ENCODE measurements at regions of chr5 and their contacts with region 1.

Region 1: GRCh38 chr5:15003511-15003920 is 131.9 kb upstream of the ANKH start:
- DNase-seq: peak; percentile 13
- ATAC-seq: peak; percentile 99
- H3K4me3 ChIP-seq: no peak overlapping the region
- H3K27ac ChIP-seq: no peak overlapping the region
- H3K4me1 ChIP-seq: no peaks in the 10 kb centered on the region
- H3K27me3 ChIP-seq: no peaks in the 10 kb centered on the region
- CTCF ChIP-seq: peak; percentile 72 to 88 (median 76); a peak in 5 of 6 replicates
- EP300 ChIP-seq: no peak
- POLR2A ChIP-seq: no peak
- RAD21 ChIP-seq: peak; percentile 84

Region 2: GRCh38 chr5:14720236-14720971 is 283.1 kb before region 1 on chr5:
- CTCF ChIA-PET with region 1: interaction called, 213 read pairs
- POLR2A ChIA-PET with region 1: interaction called, 6 read pairs
- RAD21 ChIA-PET with region 1: interaction called, 65 read pairs
- SMC1A ChIA-PET with region 1: interaction called, 90 read pairs
- in situ Hi-C with region 1: loop called (anchors 5 kb)
- intact Hi-C with region 1: no loop called
- DNase-seq: no peak
- ATAC-seq: no peak
- H3K4me3 ChIP-seq: no peak overlapping the region
- H3K27ac ChIP-seq: no peak overlapping the region
- H3K4me1 ChIP-seq: no peaks in the 10 kb centered on the region
- H3K27me3 ChIP-seq: no peaks in the 10 kb centered on the region
- CTCF ChIP-seq: no peak
- EP300 ChIP-seq: no peak
- POLR2A ChIP-seq: no peak
- RAD21 ChIP-seq: no peak

Region 3: GRCh38 chr5:14732991-14733390 is 270.5 kb before region 1 on chr5:
- CTCF ChIA-PET with region 1: interaction called, 213 read pairs
- POLR2A ChIA-PET with region 1: interaction called, 6 read pairs
- RAD21 ChIA-PET with region 1: interaction called, 65 read pairs
- SMC1A ChIA-PET with region 1: interaction called, 90 read pairs
- in situ Hi-C with region 1: no loop called
- intact Hi-C with region 1: no loop called
- DNase-seq: no peak
- ATAC-seq: no peak
- H3K4me3 ChIP-seq: no peak overlapping the region
- H3K27ac ChIP-seq: no peak overlapping the region
- H3K4me1 ChIP-seq: no peaks in the 10 kb centered on the region
- H3K27me3 ChIP-seq: no peaks in the 10 kb centered on the region
- CTCF ChIP-seq: no peak
- EP300 ChIP-seq: no peak
- POLR2A ChIP-seq: no peak
- RAD21 ChIP-seq: no peak

Region 4: DNA sequence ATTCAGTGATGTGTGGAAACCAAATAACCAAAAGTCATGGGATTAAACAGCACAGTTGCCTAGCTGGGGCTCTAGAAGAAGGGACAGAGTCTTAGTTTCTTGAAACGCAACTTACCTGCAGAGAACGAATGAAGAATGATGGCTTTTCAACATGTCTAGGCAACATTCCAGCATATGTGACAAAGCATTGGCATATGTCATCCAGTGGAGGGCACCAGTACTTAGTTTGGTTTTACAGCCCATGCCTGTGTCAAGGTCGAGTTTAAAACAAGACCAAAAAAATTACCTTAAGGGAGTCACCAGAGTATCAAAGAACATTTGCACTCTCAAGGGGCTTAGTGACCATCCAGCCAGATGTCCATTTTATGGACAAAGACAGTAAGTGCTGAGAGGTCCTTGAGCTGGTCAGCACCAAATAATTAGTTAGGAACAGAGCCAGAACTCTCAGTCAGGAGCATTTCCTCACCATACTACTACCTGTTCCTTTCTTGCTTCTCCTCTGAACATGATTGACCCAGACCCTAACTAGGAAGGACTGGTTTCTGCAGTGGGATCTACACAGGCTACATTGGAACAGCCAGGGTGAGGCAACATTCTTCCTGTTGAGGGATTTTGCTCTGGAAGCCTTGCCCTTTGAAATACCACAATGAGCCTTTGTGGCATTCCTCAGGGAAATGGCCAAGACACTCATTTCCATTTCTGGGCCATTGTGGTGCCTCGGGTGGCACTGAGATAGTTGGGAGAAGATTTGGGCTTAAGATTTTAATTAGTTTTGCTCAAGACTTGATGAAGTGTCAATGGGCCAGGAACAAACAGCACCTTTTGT is 56.5 kb before region 1 on chr5:
- CTCF ChIA-PET with region 1: interaction called, 14 read pairs
- POLR2A ChIA-PET with region 1: no interaction called
- RAD21 ChIA-PET with region 1: no interaction called
- SMC1A ChIA-PET with region 1: no interaction called
- in situ Hi-C with region 1: no loop called
- intact Hi-C with region 1: loop called (anchors 1 kb)
- DNase-seq: peak; percentile 15
- ATAC-seq: peak; percentile 85
- H3K4me3 ChIP-seq: no peak overlapping the region
- H3K27ac ChIP-seq: no peak overlapping the region
- H3K4me1 ChIP-seq: no peaks in the 10 kb centered on the region
- H3K27me3 ChIP-seq: no peaks in the 10 kb centered on the region; a peak in 1 of 4 replicates
- CTCF ChIP-seq: peak; percentile 47 to 59 (median 50); a peak in 5 of 6 replicates
- EP300 ChIP-seq: no peak
- POLR2A ChIP-seq: no peak
- RAD21 ChIP-seq: peak; percentile 42; the same call in 1 of the 2 replicates

Measured in GM12878 (cell line).